Caco-2 (cell line): ENCODE measurements at regions of chr17 and their contacts with region 1.

Region 1: DNA sequence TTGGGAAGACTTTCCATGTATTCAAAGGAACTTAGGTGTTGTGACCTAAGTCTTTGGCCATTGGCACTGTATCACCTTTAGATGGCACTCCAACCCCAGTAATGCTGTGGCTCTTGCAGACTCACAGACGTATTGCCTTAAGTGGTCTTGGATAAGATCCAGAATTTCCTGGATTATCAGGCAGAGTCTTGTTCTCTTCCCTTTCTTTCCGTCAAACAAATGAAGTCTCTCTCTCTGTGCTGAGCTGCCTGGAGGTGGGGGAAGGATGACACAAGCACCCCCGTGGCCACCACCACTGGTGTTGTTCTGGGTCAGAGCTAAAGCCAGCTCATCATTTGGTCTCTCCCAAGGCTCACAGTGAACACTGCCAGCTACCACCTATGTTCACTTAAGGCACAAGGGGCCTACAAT is 789.9 kb upstream of the KIF2B start:
- DNase-seq: peak; percentile 75 to 80
- H3K4me3 ChIP-seq: no peak overlapping the region
- H3K4me3 Mint-ChIP-seq: no peak overlapping the region
- H3K27ac Mint-ChIP-seq: no peak overlapping the region
- H3K4me1 ChIP-seq: peaks cover 5% of the 10 kb centered on the region; the same call in 1 of the 2 replicates
- H3K4me1 Mint-ChIP-seq: peaks cover 8% of the 10 kb centered on the region
- H3K27me3 ChIP-seq: no peaks in the 10 kb centered on the region
- H3K27me3 Mint-ChIP-seq: no peaks in the 10 kb centered on the region
- CTCF ChIP-seq: peak; percentile 75 to 82

Region 2: DNA sequence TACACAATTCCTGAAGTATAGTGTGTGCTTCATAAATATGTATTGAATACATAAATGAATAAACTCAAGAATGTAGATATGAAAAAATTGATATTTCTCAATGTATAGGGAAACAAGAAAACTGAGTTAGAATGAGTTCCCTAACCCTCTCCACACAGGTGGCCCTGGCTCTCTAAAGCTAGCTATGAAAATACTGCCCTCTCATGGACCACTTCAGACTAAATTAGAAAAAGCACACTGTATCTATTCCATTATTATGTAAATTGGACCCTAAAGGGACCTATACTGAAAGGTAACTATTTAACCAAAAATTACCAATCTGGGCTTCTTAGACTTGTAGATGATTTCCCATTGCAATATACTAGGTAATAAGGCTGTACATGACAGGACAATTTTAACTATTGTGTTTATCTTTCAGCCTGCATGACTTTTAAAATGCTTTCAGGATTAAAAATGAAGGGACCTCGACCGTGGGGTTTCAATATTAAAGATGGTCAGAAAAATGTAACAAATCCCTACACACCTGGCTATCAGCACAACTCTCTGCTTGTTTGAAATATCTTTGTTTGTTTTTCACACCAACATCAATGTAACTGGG is 117.3 kb after region 1 on chr17:
- CTCF ChIA-PET with region 1: interaction called, 8 read pairs
- POLR2A ChIA-PET with region 1: no interaction called
- intact Hi-C with region 1: loop called (anchors 1 kb)
- DNase-seq: peak in 1 of 2 experiments; percentile 36
- H3K4me3 ChIP-seq: no peak overlapping the region
- H3K4me3 Mint-ChIP-seq: no peak overlapping the region
- H3K27ac Mint-ChIP-seq: no peak overlapping the region
- H3K4me1 ChIP-seq: no peaks in the 10 kb centered on the region
- H3K4me1 Mint-ChIP-seq: peaks cover 10% of the 10 kb centered on the region
- H3K27me3 ChIP-seq: no peaks in the 10 kb centered on the region
- H3K27me3 Mint-ChIP-seq: peaks cover 2% of the 10 kb centered on the region
- CTCF ChIP-seq: peak; percentile 46 to 49

Region 3: GRCh38 chr17:53186001-53186400 is 153.1 kb after region 1 on chr17:
- CTCF ChIA-PET with region 1: no interaction called
- POLR2A ChIA-PET with region 1: no interaction called
- intact Hi-C with region 1: loop called (anchors 1 kb)
- DNase-seq: peak in 1 of 2 experiments; percentile 9
- H3K4me3 ChIP-seq: no peak overlapping the region
- H3K4me3 Mint-ChIP-seq: no peak overlapping the region
- H3K27ac Mint-ChIP-seq: no peak overlapping the region
- H3K4me1 ChIP-seq: no peaks in the 10 kb centered on the region
- H3K4me1 Mint-ChIP-seq: no peaks in the 10 kb centered on the region
- H3K27me3 ChIP-seq: no peaks in the 10 kb centered on the region
- H3K27me3 Mint-ChIP-seq: peaks cover 10% of the 10 kb centered on the region
- CTCF ChIP-seq: peak in 1 of 2 experiments; percentile 36

Region 4: GRCh38 chr17:53273126-53273525 is 240.3 kb after region 1 on chr17:
- CTCF ChIA-PET with region 1: no interaction called
- POLR2A ChIA-PET with region 1: no interaction called
- intact Hi-C with region 1: loop called (anchors 1 kb)
- DNase-seq: no peak
- H3K4me3 ChIP-seq: no peak overlapping the region
- H3K4me3 Mint-ChIP-seq: no peak overlapping the region
- H3K27ac Mint-ChIP-seq: no peak overlapping the region
- H3K4me1 ChIP-seq: no peaks in the 10 kb centered on the region
- H3K4me1 Mint-ChIP-seq: no peaks in the 10 kb centered on the region
- H3K27me3 ChIP-seq: no peaks in the 10 kb centered on the region
- H3K27me3 Mint-ChIP-seq: peaks cover 8% of the 10 kb centered on the region
- CTCF ChIP-seq: no peak

Region 5: GRCh38 chr17:53570731-53571130 is 537.9 kb after region 1 on chr17:
- CTCF ChIA-PET with region 1: no interaction called
- POLR2A ChIA-PET with region 1: no interaction called
- intact Hi-C with region 1: loop called (anchors 1 kb)
- DNase-seq: no peak
- H3K4me3 ChIP-seq: no peak overlapping the region
- H3K4me3 Mint-ChIP-seq: no peak overlapping the region
- H3K27ac Mint-ChIP-seq: no peak overlapping the region
- H3K4me1 ChIP-seq: no peaks in the 10 kb centered on the region
- H3K4me1 Mint-ChIP-seq: no peaks in the 10 kb centered on the region
- H3K27me3 ChIP-seq: no peaks in the 10 kb centered on the region
- H3K27me3 Mint-ChIP-seq: no peaks in the 10 kb centered on the region
- CTCF ChIP-seq: no peak

Region 6: DNA sequence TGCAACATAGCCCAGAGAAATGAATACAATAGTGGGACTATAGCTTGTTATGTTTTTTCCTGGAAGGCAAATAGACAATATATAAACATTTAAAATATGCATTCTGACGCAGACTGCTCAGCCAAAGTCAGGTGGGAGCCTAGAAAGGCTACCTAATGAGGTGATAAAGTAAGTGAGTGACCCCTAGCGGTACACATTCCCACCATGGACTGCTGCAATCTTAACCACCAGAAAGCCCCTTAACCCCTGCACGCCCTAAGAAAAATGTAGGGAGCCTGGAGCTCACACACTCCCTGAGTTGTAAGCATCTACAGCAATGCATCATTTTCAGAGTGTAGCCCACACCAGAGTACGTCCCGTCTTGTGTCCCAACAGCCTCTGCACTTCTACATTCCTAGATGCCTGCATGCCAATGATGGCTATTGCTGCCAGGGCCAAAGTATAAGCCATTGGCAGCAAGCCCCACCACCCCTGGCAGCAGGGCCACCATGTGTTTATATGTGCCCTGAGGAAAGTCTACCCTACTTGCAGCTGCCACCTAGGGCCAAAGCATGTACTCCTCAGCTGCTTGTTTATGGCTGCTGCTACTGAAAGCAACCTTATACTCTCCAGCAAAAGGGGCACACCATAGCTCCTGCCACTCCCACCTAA is 917.5 kb after region 1 on chr17:
- CTCF ChIA-PET with region 1: no interaction called
- POLR2A ChIA-PET with region 1: no interaction called
- intact Hi-C with region 1: loop called (anchors 2 kb)
- DNase-seq: peak; percentile 47 to 55
- H3K4me3 ChIP-seq: no peak overlapping the region
- H3K4me3 Mint-ChIP-seq: no peak overlapping the region
- H3K27ac Mint-ChIP-seq: no peak overlapping the region
- H3K4me1 ChIP-seq: no peaks in the 10 kb centered on the region
- H3K4me1 Mint-ChIP-seq: no peaks in the 10 kb centered on the region
- H3K27me3 ChIP-seq: no peaks in the 10 kb centered on the region
- H3K27me3 Mint-ChIP-seq: no peaks in the 10 kb centered on the region
- CTCF ChIP-seq: peak; percentile 59 to 67

Region 7: GRCh38 chr17:54426296-54426886 is 1393.5 kb after region 1 on chr17:
- CTCF ChIA-PET with region 1: no interaction called
- POLR2A ChIA-PET with region 1: no interaction called
- intact Hi-C with region 1: loop called (anchors 2 kb)
- DNase-seq: peak in 1 of 2 experiments; percentile 14
- H3K4me3 ChIP-seq: no peak overlapping the region
- H3K4me3 Mint-ChIP-seq: no peak overlapping the region
- H3K27ac Mint-ChIP-seq: no peak overlapping the region
- H3K4me1 ChIP-seq: no peaks in the 10 kb centered on the region
- H3K4me1 Mint-ChIP-seq: no peaks in the 10 kb centered on the region
- H3K27me3 ChIP-seq: no peaks in the 10 kb centered on the region
- H3K27me3 Mint-ChIP-seq: no peaks in the 10 kb centered on the region
- CTCF ChIP-seq: peak; percentile 28 to 54